ENCODE measurements at regions of chr16 and their contacts with region 1.

Region 1: GRCh38 chr16:3129137-3130131 is 5.4 kb upstream of the ZNF213 start:
- DNase-seq: peak; percentile 73 to 96
- H3K4me3 ChIP-seq: peak overlapping the region; percentile 43 to 61 (median 45)
- H3K27ac ChIP-seq: peak overlapping the region; percentile 56 to 91 (median 76)
- H3K4me1 ChIP-seq: peaks cover 33 to 68% (median 55%) of the 10 kb centered on the region in 4 donors
- H3K27me3 ChIP-seq: no peaks in the 10 kb centered on the region
- CTCF ChIP-seq: peak in 5 of 7 experiments; percentile 73 to 91 (median 80)
- EP300 ChIP-seq: no peak
- POLR2A ChIP-seq: no peak

Region 2: GRCh38 chr16:3059000-3059722 is 70.3 kb before region 1 on chr16:
- intact Hi-C with region 1: loop called (anchors 5 kb)
- DNase-seq: peak; percentile 91 to 97
- H3K4me3 ChIP-seq: peak overlapping the region; percentile 57 to 92 (median 78)
- H3K27ac ChIP-seq: peak overlapping the region; percentile 75 to 88 (median 85)
- H3K4me1 ChIP-seq: peaks cover 15 to 52% (median 23%) of the 10 kb centered on the region in 4 donors
- H3K27me3 ChIP-seq: peaks cover 0 to 8% (median 0%) of the 10 kb centered on the region in 3 donors
- CTCF ChIP-seq: peak in 5 of 7 experiments; percentile 64 to 98 (median 91)
- EP300 ChIP-seq: no peak
- POLR2A ChIP-seq: no peak

Measured in stomach (tissue), 19 donors.